WTC11 (cell line): ENCODE measurements at regions of chr14 and their contacts with region 1.

Region 1: GRCh38 chr14:54347997-54348611 is 48.7 kb upstream of the CDKN3 start:
- DNase-seq: no peak
- ATAC-seq: peak; percentile 58
- H3K4me3 Mint-ChIP-seq: no peak overlapping the region
- H3K27ac Mint-ChIP-seq: no peak overlapping the region
- H3K4me1 Mint-ChIP-seq: peaks cover 56% of the 10 kb centered on the region
- H3K27me3 Mint-ChIP-seq: no peaks in the 10 kb centered on the region; the same call in 1 of the 2 replicates
- CTCF ChIP-seq: peak; percentile 85

Region 2: GRCh38 chr14:53306267-53306721 is 1041.8 kb before region 1 on chr14:
- CTCF ChIA-PET with region 1: interaction called, 15 read pairs
- POLR2A ChIA-PET with region 1: no interaction called
- DNase-seq: peak; percentile 53
- ATAC-seq: peak; percentile 89
- H3K4me3 Mint-ChIP-seq: peak overlapping the region; percentile 45
- H3K27ac Mint-ChIP-seq: no peak overlapping the region
- H3K4me1 Mint-ChIP-seq: peaks cover 6% of the 10 kb centered on the region; the same call in 1 of the 2 replicates
- H3K27me3 Mint-ChIP-seq: no peaks in the 10 kb centered on the region; the same call in none of the 2 replicates
- CTCF ChIP-seq: peak; percentile 60

Region 3: GRCh38 chr14:53953002-53953827 is 394.9 kb before region 1 on chr14:
- CTCF ChIA-PET with region 1: interaction called, 14 read pairs
- POLR2A ChIA-PET with region 1: no interaction called
- DNase-seq: peak; percentile 81
- ATAC-seq: peak; percentile 33
- H3K4me3 Mint-ChIP-seq: peak overlapping the region; percentile 97
- H3K27ac Mint-ChIP-seq: peak overlapping the region; percentile 94
- H3K4me1 Mint-ChIP-seq: peaks cover 53% of the 10 kb centered on the region
- H3K27me3 Mint-ChIP-seq: peaks cover 85% of the 10 kb centered on the region
- CTCF ChIP-seq: no peak

Region 4: DNA sequence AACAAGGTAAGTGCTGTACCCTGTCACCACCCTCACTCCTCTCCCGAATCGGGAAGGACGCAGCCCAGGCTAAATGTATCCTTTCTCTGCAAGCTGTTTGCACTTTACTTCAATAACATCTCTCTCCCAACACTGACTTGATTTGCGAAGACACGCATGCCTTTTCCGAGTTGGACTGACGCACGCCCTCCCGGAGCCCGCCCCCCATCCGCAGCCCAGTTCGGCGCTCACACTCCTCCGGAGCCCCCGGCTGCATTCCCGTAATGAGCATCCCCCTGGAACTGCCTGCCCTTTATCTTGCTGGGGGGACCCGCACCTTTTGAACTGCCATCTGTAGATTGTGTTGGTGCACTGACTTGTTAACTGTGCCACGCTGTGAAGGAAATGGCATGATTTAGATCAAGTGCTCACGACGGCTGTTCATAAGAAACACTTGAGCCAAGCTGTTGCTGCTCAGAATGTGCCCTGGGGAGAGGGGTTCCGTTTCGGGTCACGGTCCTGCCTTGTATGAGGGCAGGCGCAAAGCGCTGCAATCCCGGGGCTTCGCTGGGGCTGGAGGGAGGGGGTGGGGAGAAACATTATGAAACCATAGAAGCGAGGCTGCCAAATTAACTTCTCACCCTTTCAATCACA is 127.9 kb before region 1 on chr14:
- CTCF ChIA-PET with region 1: interaction called, 20 read pairs
- POLR2A ChIA-PET with region 1: no interaction called
- DNase-seq: peak; percentile 42
- ATAC-seq: peak; percentile 62
- H3K4me3 Mint-ChIP-seq: peak overlapping the region; percentile 84
- H3K27ac Mint-ChIP-seq: no peak overlapping the region
- H3K4me1 Mint-ChIP-seq: peaks cover 34% of the 10 kb centered on the region
- H3K27me3 Mint-ChIP-seq: peaks cover 64% of the 10 kb centered on the region
- CTCF ChIP-seq: no peak

Region 5: DNA sequence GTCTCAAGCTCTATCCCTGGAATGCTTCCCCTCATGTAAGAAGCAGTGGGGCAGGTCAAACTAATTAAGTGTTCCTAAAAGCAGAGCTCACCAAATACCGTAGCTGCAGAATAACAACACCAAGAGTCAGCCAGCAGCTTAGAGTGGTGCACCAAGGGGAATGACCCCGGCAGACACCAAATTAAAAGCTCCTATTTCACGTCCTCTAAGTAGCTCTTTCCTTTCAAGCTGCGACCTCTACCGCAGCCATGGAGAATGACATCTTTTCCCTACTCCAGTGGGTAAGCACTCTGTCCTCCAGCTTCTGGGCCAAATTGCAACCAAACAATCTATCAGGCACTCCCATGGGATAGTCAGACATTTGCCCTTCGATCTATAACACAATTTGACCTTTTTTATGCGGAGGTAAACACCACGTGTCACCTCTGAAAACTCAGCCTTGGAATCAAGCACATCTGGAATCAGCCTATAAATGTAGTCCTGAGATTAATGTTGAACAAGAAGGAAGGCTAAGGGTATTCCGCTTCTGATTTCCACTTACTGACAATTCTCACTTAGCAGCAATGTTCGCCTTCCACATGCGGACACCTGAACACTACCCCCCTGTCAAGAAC is 18.9 kb before region 1 on chr14:
- CTCF ChIA-PET with region 1: interaction called, 42 read pairs
- POLR2A ChIA-PET with region 1: no interaction called
- DNase-seq: peak; percentile 60
- ATAC-seq: peak; percentile 99
- H3K4me3 Mint-ChIP-seq: no peak overlapping the region
- H3K27ac Mint-ChIP-seq: no peak overlapping the region
- H3K4me1 Mint-ChIP-seq: peaks cover 3% of the 10 kb centered on the region
- H3K27me3 Mint-ChIP-seq: no peaks in the 10 kb centered on the region
- CTCF ChIP-seq: peak; percentile 68

Region 6: DNA sequence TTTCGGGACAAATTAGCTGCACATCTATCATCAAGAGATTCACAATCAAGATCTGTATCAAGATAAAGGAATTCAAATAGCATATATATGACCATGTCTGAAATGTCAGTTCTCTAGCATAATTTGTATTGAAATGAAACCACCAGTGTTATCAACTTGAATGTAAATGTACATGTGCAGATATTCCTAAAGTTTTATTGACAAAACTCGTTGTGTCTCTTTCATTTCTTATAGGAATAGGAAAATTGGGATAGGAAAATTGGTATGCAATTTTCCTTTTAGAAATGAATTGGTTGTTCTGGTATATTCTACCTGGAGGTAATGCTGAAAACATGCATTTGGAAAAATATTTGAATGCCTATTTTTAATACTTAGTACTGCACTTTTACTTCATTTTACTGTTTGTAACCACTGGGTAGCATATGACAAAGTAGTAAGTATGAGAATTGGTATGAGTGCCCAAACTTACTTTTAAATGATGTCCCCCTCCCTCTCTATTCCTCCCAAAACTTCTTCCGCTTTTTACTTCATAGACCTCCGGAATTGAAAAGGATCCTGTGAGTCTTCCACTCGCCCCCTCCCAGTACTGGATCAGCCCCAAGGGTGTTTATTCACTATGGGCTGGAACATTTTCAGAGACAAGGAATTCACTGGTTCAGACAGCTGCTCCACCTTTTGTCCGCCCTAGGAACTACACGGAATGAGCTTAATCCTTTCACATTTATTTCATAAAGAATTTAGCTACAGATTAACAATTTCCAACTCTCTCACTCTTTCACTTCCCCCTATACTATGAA is 72.1 kb after region 1 on chr14:
- CTCF ChIA-PET with region 1: interaction called, 29 read pairs
- POLR2A ChIA-PET with region 1: no interaction called
- DNase-seq: peak; percentile 59
- ATAC-seq: peak; percentile 95
- H3K4me3 Mint-ChIP-seq: no peak overlapping the region
- H3K27ac Mint-ChIP-seq: no peak overlapping the region; the same call in 1 of the 2 replicates
- H3K4me1 Mint-ChIP-seq: peaks cover 5% of the 10 kb centered on the region
- H3K27me3 Mint-ChIP-seq: no peaks in the 10 kb centered on the region
- CTCF ChIP-seq: peak; percentile 47; the same call in 1 of the 2 replicates

Region 7: GRCh38 chr14:54854181-54854580 is 506.1 kb after region 1 on chr14:
- CTCF ChIA-PET with region 1: no interaction called
- POLR2A ChIA-PET with region 1: no interaction called
- DNase-seq: peak; percentile 37
- ATAC-seq: peak; percentile 99
- H3K4me3 Mint-ChIP-seq: no peak overlapping the region
- H3K27ac Mint-ChIP-seq: no peak overlapping the region
- H3K4me1 Mint-ChIP-seq: peaks cover 16% of the 10 kb centered on the region
- H3K27me3 Mint-ChIP-seq: no peaks in the 10 kb centered on the region
- CTCF ChIP-seq: no peak

Region 8: GRCh38 chr14:54893151-54893760 is 545.2 kb after region 1 on chr14:
- CTCF ChIA-PET with region 1: no interaction called
- POLR2A ChIA-PET with region 1: no interaction called
- DNase-seq: no peak
- ATAC-seq: peak; percentile 65; the same call in 1 of the 2 replicates
- H3K4me3 Mint-ChIP-seq: no peak overlapping the region
- H3K27ac Mint-ChIP-seq: no peak overlapping the region
- H3K4me1 Mint-ChIP-seq: peaks cover 8% of the 10 kb centered on the region
- H3K27me3 Mint-ChIP-seq: no peaks in the 10 kb centered on the region
- CTCF ChIP-seq: peak; percentile 65